ENCODE measurements at regions of chr6 and their contacts with region 1.

Region 1: GRCh38 chr6:26065952-26066380 is 21.3 kb upstream of the HFE start:
- DNase-seq: peak; percentile 79
- ATAC-seq: peak; percentile 81
- H3K4me3 ChIP-seq: no peak overlapping the region
- H3K27ac ChIP-seq: peak overlapping the region; percentile 37; the same call in 1 of the 2 replicates
- H3K4me1 ChIP-seq: peaks cover 18 to 29% of the 10 kb centered on the region in 2 experiments; a peak in 3 of 4 replicates
- H3K27me3 ChIP-seq: no peaks in the 10 kb centered on the region
- CTCF ChIP-seq: peak; percentile 77 to 92 (median 86)
- POLR2A ChIP-seq: no peak
- RAD21 ChIP-seq: peak; percentile 94

Region 2: GRCh38 chr6:26087284-26088115 is 21.5 kb after region 1 on chr6 and contains the start of gene HFE:
- CTCF ChIA-PET with region 1: interaction called, 11 read pairs
- POLR2A ChIA-PET with region 1: interaction called, 4 read pairs
- RAD21 ChIA-PET with region 1: no interaction called
- intact Hi-C with region 1: no loop called
- DNase-seq: no peak
- ATAC-seq: peak; percentile 76
- H3K4me3 ChIP-seq: peak within 1 kb of the TSS; percentile 72 to 85
- H3K27ac ChIP-seq: peak within 1 kb of the TSS; percentile 69
- H3K4me1 ChIP-seq: peaks cover 10 to 24% of the 10 kb centered on the region in 2 experiments; a peak in 3 of 4 replicates
- H3K27me3 ChIP-seq: no peaks in the 10 kb centered on the region
- CTCF ChIP-seq: peak in 1 of 3 experiments; percentile 15; a peak in 1 of 6 replicates
- POLR2A ChIP-seq: no peak
- RAD21 ChIP-seq: no peak
- total RNA-seq, gene HFE: 9.8 TPM

Region 3: GRCh38 chr6:26097268-26097875 is 31.4 kb after region 1 on chr6:
- CTCF ChIA-PET with region 1: interaction called, 13 read pairs
- POLR2A ChIA-PET with region 1: interaction called, 3 read pairs
- RAD21 ChIA-PET with region 1: interaction called in 1 of 2 experiments, 3 read pairs
- intact Hi-C with region 1: loop called (anchors 1 kb)
- DNase-seq: peak; percentile 55
- ATAC-seq: peak; percentile 93
- H3K4me3 ChIP-seq: no peak overlapping the region
- H3K27ac ChIP-seq: no peak overlapping the region
- H3K4me1 ChIP-seq: peaks cover 2 to 4% of the 10 kb centered on the region in 2 experiments; a peak in 3 of 4 replicates
- H3K27me3 ChIP-seq: no peaks in the 10 kb centered on the region
- CTCF ChIP-seq: peak; percentile 60 to 86 (median 86)
- POLR2A ChIP-seq: no peak
- RAD21 ChIP-seq: peak; percentile 85

Region 4: GRCh38 chr6:26103770-26104456 is 37.9 kb after region 1 on chr6:
- CTCF ChIA-PET with region 1: interaction called, 13 read pairs
- POLR2A ChIA-PET with region 1: interaction called, 4 read pairs
- RAD21 ChIA-PET with region 1: interaction called in 1 of 2 experiments, 3 read pairs
- intact Hi-C with region 1: no loop called
- DNase-seq: peak; percentile 95
- ATAC-seq: peak; percentile 74
- H3K4me3 ChIP-seq: peak overlapping the region; percentile 48 to 59
- H3K27ac ChIP-seq: peak overlapping the region; percentile 94
- H3K4me1 ChIP-seq: peaks cover 17 to 39% of the 10 kb centered on the region in 2 experiments
- H3K27me3 ChIP-seq: no peaks in the 10 kb centered on the region
- CTCF ChIP-seq: peak in 2 of 3 experiments; percentile 35 to 40; a peak in 2 of 6 replicates
- POLR2A ChIP-seq: peak; percentile 99
- RAD21 ChIP-seq: peak; percentile 42

Measured in HCT116 (cell line).